GM18951 (cell line): ENCODE measurements at regions of chr2 and their contacts with region 1.

Region 1: GRCh38 chr2:194566907-194567660 is 1089.9 kb upstream of the SLC39A10 start:
- POLR2A ChIP-seq: no peak

Region 2: DNA sequence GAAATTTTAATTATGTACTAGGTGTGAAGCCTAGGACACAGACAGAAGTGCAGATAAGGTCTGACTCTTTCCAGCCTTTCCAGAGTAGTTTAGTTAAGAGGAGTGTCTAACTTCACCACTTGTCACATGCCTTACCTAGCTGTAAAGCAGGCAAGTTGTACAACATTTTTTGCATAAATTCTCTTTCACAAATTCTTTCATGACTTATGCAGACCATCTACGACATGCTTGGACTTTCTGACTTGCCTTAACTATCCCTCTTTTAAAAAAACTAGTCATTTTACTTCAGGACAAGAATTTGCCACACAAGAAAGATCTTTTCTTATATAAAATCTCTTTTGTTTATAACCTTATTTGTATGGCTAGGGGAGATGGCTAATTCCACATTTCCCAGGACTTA is 183.7 kb before region 1 on chr2:
- in situ Hi-C with region 1: no loop called
- POLR2A ChIP-seq: no peak

Region 3: DNA sequence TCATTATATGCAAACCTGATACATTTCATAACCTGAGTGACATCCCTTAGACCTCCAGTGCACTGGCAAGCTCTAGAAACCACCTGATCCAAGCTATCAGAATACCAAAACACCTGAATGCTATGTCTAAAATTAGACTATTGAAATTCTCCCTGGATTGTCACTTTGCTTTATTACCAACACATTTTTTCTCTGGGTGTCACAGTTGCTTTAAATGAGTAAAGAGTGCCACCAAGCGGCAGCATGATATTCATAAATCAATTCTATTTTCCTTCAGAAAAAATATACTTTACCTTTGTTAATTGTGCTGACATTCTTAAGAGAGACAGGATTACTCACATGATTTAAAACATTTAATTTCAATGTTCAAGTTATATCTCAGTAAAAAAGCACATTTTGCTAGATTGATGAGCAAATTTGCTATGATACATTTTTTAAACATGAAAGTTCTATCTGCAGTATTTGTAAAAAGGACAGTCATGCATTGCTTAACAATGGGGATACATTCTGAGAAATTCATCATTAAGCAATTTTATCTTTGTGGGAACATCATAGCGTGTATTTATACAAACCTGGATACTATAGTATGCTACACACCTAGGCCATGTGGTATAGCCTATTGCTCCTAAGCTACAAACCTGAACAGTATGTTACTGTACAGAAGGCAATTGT is 751.5 kb after region 1 on chr2:
- in situ Hi-C with region 1: loop called (anchors 25 kb)
- POLR2A ChIP-seq: no peak